Naive thymus-derived CD4-positive, alpha-beta T cell (primary cell): ENCODE measurements at regions of chr3 and their contacts with region 1.

Region 1: DNA sequence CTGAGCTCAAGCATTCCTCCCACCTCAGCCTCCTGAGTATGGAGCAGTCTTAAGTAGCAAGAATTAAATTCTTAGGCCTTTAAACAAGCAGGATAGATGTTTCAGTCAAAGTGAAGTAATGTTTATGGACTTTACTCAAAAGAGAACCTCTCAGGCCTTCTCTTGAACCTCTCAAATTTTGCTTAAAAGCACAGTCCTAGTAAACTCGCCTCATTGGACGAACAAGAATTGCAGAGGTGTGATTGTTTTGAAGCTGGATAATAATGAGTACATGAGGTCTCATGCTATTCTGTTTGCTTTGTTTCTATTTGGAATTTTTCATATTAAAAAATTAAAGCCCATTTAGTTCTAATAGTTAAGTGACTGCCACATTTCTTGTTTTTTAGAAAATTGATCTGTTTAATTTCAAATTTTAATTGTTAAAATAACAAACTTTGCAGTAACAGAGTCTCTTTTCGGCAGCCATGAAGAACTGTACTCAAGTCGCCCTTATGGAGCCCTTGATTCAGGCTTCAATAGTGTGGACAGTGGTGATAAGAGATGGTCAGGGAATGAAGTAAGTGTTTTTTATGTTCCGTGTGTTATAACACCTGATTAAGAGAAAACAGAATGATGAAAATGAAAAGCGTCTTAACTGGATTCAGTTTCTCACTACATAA is 39.4 kb downstream of the LRCH3 start:
- DNase-seq: no peak
- ATAC-seq: no peak
- H3K4me3 ChIP-seq: no peak overlapping the region
- H3K4me3 Mint-ChIP-seq: no peak overlapping the region
- H3K27ac ChIP-seq: no peak overlapping the region
- H3K27ac Mint-ChIP-seq: peak overlapping the region in 1 of 9 donors; percentile 36
- H3K4me1 ChIP-seq: no peaks in the 10 kb centered on the region
- H3K4me1 Mint-ChIP-seq: no peaks in the 10 kb centered on the region
- H3K27me3 ChIP-seq: no peaks in the 10 kb centered on the region
- H3K27me3 Mint-ChIP-seq: no peaks in the 10 kb centered on the region

Region 2: DNA sequence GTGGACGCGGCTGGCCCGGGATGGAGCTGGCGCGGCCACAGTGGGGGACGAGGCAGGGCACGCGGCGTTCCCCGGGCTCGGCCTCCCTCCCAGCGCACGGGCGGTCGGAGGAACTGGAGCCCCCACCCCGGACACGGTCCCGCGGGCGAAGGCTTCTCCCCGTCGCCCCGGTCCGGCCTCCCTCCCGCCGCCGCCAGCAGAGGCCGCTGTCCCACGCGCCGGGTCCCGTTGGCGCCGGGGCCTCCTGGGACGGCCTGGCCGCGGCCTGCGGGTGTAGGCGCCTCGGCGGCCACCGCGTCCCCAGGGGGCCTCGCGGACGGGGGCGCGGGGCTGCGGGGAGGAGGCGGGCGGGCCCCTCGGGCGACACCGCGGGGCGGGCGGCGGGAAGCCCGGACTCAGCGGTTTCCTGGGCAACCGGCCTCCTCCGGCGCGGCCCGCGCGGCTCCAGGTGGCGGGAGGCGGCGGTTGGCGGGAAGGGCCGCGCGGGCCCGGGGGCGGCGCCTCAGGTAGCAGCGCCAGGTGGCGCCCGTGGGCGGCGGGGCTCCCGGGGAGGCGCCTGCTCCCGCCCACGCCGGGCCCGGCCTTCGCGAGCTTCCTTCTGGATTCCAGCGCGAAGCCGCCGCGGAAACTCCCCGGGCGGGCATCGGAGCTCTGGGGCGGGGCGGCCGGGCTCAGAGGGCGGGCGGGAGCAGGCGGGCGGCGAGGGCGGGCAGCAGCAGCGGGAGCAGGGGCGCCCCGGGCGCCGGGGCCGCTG is 827.6 kb before region 1 on chr3:
- CTCF ChIA-PET with region 1: no interaction called
- POLR2A ChIA-PET with region 1: no interaction called
- intact Hi-C with region 1: no loop called
- DNase-seq: peak; percentile 60 to 91 (median 77)
- ATAC-seq: peak; percentile 87
- H3K4me3 ChIP-seq: peak overlapping the region; percentile 33
- H3K4me3 Mint-ChIP-seq: peak overlapping the region in 4 of 10 donors; percentile 70 to 80 (median 80)
- H3K27ac ChIP-seq: peak overlapping the region; percentile 57
- H3K27ac Mint-ChIP-seq: peak overlapping the region in 3 of 9 donors; percentile 58 to 74 (median 62)
- H3K4me1 ChIP-seq: peaks cover 8% of the 10 kb centered on the region in 2 donors
- H3K4me1 Mint-ChIP-seq: peaks cover 4 to 19% (median 13%) of the 10 kb centered on the region in 7 donors
- H3K27me3 ChIP-seq: no peaks in the 10 kb centered on the region
- H3K27me3 Mint-ChIP-seq: peaks cover 0 to 2% (median 0%) of the 10 kb centered on the region in 5 donors

Region 3: GRCh38 chr3:197554562-197555280 is 275.7 kb before region 1 on chr3:
- CTCF ChIA-PET with region 1: no interaction called
- POLR2A ChIA-PET with region 1: no interaction called
- intact Hi-C with region 1: no loop called
- DNase-seq: peak; percentile 76 to 93 (median 83)
- ATAC-seq: peak; percentile 97
- H3K4me3 ChIP-seq: peak overlapping the region; percentile 96
- H3K4me3 Mint-ChIP-seq: peak overlapping the region; percentile 91 to 95 (median 93)
- H3K27ac ChIP-seq: peak overlapping the region; percentile 89
- H3K27ac Mint-ChIP-seq: peak overlapping the region; percentile 57 to 94 (median 86)
- H3K4me1 ChIP-seq: peaks cover 7 to 9% of the 10 kb centered on the region in 2 donors
- H3K4me1 Mint-ChIP-seq: peaks cover 23 to 36% (median 31%) of the 10 kb centered on the region in 7 donors
- H3K27me3 ChIP-seq: no peaks in the 10 kb centered on the region
- H3K27me3 Mint-ChIP-seq: peaks cover 0 to 10% (median 6%) of the 10 kb centered on the region in 5 donors

Region 4: GRCh38 chr3:197814372-197814771 is 16.1 kb before region 1 on chr3:
- CTCF ChIA-PET with region 1: no interaction called
- POLR2A ChIA-PET with region 1: no interaction called
- intact Hi-C with region 1: loop called in 1 of 2 experiments (anchors 2 kb)
- DNase-seq: no peak
- ATAC-seq: no peak
- H3K4me3 ChIP-seq: no peak overlapping the region
- H3K4me3 Mint-ChIP-seq: no peak overlapping the region
- H3K27ac ChIP-seq: no peak overlapping the region
- H3K27ac Mint-ChIP-seq: peak overlapping the region in 1 of 9 donors; percentile 48
- H3K4me1 ChIP-seq: no peaks in the 10 kb centered on the region
- H3K4me1 Mint-ChIP-seq: peaks cover 10 to 36% (median 30%) of the 10 kb centered on the region in 7 donors
- H3K27me3 ChIP-seq: no peaks in the 10 kb centered on the region
- H3K27me3 Mint-ChIP-seq: no peaks in the 10 kb centered on the region